ENCODE measurements at regions of chr6 and their contacts with region 1.

Region 1: GRCh38 chr6:27126815-27127537 is 120.5 kb upstream of the PRSS16 start:
- H3K4me3 ChIP-seq: peak overlapping the region; percentile 8
- H3K27ac ChIP-seq: no peak overlapping the region
- H3K4me1 ChIP-seq: peaks cover 10% of the 10 kb centered on the region
- CTCF ChIP-seq: peak; percentile 91

Region 2: GRCh38 chr6:27114792-27115191 is 12.2 kb before region 1 on chr6:
- CTCF ChIA-PET with region 1: interaction called, 13 read pairs
- POLR2A ChIA-PET with region 1: interaction called, 3 read pairs
- H3K4me3 ChIP-seq: no peak overlapping the region
- H3K27ac ChIP-seq: no peak overlapping the region
- H3K4me1 ChIP-seq: no peaks in the 10 kb centered on the region
- CTCF ChIP-seq: no peak

Region 3: DNA sequence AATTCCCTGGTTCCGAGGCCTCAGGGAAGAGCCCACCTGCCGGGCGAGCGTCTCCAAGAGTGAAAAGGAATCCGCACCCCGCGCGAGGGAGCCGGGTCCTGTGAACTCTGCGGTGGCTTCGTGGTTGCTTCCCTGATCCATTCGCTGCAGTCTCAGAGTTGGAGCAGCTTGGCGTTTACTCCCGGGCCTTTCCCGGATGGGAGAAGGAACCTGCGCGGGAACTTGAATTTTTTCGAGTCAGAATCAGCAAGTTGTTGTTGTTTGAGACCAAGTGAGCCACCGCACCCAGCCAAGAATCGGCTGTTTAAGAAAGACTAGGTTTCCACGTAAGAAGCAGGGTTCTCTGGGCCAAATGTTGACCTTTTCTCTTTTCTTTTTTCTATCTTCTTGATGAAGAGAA is 133.4 kb after region 1 on chr6:
- CTCF ChIA-PET with region 1: no interaction called
- POLR2A ChIA-PET with region 1: no interaction called
- H3K4me3 ChIP-seq: no peak overlapping the region
- H3K27ac ChIP-seq: no peak overlapping the region
- H3K4me1 ChIP-seq: no peaks in the 10 kb centered on the region
- CTCF ChIP-seq: no peak

Region 4: GRCh38 chr6:27280064-27280539 is 153.1 kb after region 1 on chr6:
- CTCF ChIA-PET with region 1: no interaction called
- POLR2A ChIA-PET with region 1: interaction called, 10 read pairs
- H3K4me3 ChIP-seq: peak overlapping the region; percentile 59
- H3K27ac ChIP-seq: peak overlapping the region; percentile 54
- H3K4me1 ChIP-seq: no peaks in the 10 kb centered on the region
- CTCF ChIP-seq: no peak